ENCODE measurements at regions of chr10 and their contacts with region 1.

Region 1: DNA sequence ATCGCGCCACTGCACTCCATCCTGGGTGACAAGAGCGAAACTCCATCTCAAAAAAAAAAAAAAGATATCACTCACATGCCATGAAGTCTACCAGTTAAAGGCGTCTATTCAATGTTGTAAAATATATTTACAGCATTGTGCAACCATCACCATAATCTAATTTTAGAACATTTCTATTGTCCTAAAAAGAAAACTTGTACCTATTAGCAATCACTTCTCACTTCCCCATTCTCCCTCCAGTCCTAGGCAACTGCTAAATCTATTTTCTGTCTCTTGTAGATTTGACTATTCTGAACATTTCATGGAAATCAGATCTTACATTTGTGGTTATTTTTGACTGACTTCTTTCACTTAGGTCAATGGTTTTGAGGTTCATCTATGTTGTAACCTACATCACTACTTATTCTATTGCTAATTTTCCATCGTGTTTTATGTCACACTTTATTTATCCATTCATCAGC is 25.2 kb upstream of the OTUD1 start:
- DNase-seq: no peak
- H3K4me3 Mint-ChIP-seq: no peak overlapping the region
- H3K27ac Mint-ChIP-seq: peak overlapping the region; percentile 56
- H3K4me1 Mint-ChIP-seq: peaks cover 20% of the 10 kb centered on the region
- H3K27me3 Mint-ChIP-seq: no peaks in the 10 kb centered on the region

Region 2: DNA sequence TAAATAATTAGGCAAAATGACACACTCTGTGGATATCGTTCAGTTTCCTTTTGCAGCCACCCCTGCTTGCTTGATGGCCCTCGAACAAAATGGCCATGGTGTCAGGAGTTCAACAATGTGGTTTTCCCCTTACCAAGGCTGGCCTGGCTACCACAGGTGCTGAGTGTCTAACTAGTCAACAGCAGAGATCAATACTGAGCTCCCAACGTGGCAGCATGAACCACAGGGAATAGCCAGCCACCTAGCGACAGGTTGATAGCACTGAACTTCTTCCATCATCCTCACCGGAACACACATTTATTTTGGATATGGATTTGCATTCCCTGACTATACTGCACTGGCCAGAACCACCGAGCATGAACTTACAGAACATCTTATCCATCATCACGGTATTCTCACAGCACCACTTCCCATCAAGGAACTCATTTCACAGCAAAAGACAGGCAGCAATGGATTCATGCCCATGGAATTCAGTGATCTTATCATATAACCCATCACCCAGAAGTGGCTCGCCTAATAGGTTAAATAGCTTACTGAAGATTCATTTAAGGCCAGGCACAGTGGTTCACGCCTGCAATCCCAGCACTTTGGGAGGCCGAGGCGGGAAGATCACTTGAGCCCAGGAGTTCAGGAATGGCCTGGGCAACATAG is 75.4 kb before region 1 on chr10:
- intact Hi-C with region 1: loop called (anchors 2 kb)
- DNase-seq: no peak
- H3K4me3 Mint-ChIP-seq: no peak overlapping the region
- H3K27ac Mint-ChIP-seq: no peak overlapping the region
- H3K4me1 Mint-ChIP-seq: peaks cover 24% of the 10 kb centered on the region
- H3K27me3 Mint-ChIP-seq: no peaks in the 10 kb centered on the region

Region 3: GRCh38 chr10:23376229-23376655 is 37.4 kb before region 1 on chr10:
- intact Hi-C with region 1: no loop called
- DNase-seq: no peak
- H3K4me3 Mint-ChIP-seq: no peak overlapping the region
- H3K27ac Mint-ChIP-seq: no peak overlapping the region
- H3K4me1 Mint-ChIP-seq: peaks cover 12% of the 10 kb centered on the region
- H3K27me3 Mint-ChIP-seq: peaks cover 3% of the 10 kb centered on the region

Region 4: DNA sequence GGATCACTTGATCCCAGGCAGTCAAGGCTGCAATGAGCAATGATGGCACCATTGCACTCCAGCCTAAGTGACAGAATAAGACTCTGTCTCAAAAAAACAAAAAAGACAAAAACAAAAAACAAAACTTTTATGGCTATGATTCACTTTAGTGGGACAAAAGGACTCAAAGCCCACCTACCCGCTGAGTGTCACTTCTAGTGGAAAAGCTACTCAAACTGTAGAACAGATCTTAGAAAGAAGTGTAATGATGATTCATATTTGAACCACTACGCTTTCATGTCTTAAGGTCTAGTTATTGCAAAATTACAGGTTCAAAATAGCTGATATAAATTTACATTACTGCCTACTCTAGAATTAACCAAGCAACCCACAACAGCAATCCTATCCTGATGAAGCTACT is 21.8 kb before region 1 on chr10:
- intact Hi-C with region 1: loop called (anchors 1 kb)
- DNase-seq: no peak
- H3K4me3 Mint-ChIP-seq: no peak overlapping the region
- H3K27ac Mint-ChIP-seq: no peak overlapping the region
- H3K4me1 Mint-ChIP-seq: peaks cover 14% of the 10 kb centered on the region
- H3K27me3 Mint-ChIP-seq: no peaks in the 10 kb centered on the region

Region 5: GRCh38 chr10:23604613-23605012 is 191.0 kb after region 1 on chr10:
- intact Hi-C with region 1: no loop called
- DNase-seq: no peak
- H3K4me3 Mint-ChIP-seq: no peak overlapping the region
- H3K27ac Mint-ChIP-seq: no peak overlapping the region
- H3K4me1 Mint-ChIP-seq: no peaks in the 10 kb centered on the region
- H3K27me3 Mint-ChIP-seq: no peaks in the 10 kb centered on the region

Measured in activated T-helper 2 cell treated with anti-CD3 and anti-CD28 coated beads, Interferon-gamma antibody, Interleukin-2, Interleukin-4, amounts not matched to agents 10 μg/mL and 5 μg/mL and 100 μg/mL, durations not matched to agents 14 hours and 24 hours and 36 hours (primary cell).